ENCODE measurements at regions of chr3 and their contacts with region 1.

Region 1: DNA sequence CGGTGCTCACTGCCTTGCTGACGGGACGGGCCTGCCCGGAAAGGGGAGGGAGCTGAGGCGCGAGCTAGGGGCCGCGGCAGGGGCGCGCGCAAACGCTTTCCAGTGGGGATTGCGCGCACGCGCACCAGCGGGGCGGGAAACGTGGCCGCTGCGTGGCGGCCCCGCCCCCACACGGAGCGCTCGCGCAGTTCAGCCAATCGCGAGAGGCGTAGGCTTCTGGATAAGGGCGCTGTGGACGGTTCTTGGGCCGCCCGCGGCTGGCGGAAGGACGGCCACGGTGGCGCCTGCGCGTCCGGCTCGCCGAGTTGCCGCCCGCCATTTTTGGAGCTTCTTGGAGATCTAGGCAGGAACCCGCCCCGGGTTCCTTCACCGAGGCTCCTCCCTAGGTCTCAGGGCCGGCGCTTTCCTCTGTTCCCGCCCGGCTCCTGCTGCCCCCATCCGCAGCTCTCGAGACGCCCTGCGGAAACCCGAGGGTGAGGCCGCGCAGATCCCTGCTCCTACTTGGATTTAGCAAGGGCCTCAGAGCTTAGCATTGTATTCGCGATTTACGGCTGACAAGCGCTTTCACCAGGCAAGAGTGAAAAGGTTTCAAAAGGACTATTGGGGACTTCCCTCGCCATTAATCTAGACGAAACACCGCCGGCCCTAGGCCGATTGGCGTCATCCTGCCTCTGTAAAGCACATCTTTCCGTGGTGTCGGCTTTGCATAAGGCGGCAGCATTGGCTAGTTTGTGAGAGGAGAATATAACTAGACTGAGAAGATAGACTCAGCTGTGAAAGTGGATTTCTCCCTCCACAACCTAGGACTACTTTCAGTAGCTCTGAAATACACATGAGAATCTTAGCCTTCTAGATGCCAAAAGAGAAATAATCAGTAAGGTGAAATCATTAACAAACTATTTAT is 496 bp upstream of the STAG1 start:
- DNase-seq: peak; percentile 93
- CTCF ChIP-seq: peak; percentile 41

Region 2: DNA sequence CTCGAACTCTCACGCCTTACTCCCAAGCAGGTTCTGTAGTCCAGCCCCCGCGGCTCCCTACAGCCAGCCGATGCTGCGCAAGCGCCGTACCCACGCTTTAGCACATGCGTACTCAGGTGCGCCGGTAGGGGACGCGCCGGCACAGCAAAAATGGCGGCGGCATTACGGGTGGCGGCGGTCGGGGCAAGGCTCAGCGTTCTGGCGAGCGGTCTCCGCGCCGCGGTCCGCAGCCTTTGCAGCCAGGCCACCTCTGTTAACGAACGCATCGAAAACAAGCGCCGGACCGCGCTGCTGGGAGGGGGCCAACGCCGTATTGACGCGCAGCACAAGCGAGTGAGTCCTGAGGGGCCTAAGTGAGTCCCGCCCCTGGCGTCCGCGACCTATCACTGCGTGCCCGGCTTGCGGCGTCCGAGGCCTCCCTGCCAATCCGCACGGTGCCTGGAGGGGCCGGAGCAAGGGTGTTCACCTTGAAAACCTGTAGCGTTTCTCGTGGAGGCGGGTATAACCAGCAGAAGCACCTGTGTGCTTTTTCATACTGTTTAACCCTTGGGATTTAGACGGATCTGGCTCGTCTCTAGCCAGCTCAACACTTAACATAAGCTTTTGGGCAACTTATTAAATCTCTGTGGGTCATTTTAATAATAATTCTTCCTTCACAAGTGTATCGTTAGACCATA is 502.3 kb before region 1 on chr3 and contains the start of gene PCCB:
- CTCF ChIA-PET with region 1: interaction called, 12 read pairs
- POLR2A ChIA-PET with region 1: interaction called, 4 read pairs
- DNase-seq: peak; percentile 94
- CTCF ChIP-seq: peak; percentile 82

Region 3: DNA sequence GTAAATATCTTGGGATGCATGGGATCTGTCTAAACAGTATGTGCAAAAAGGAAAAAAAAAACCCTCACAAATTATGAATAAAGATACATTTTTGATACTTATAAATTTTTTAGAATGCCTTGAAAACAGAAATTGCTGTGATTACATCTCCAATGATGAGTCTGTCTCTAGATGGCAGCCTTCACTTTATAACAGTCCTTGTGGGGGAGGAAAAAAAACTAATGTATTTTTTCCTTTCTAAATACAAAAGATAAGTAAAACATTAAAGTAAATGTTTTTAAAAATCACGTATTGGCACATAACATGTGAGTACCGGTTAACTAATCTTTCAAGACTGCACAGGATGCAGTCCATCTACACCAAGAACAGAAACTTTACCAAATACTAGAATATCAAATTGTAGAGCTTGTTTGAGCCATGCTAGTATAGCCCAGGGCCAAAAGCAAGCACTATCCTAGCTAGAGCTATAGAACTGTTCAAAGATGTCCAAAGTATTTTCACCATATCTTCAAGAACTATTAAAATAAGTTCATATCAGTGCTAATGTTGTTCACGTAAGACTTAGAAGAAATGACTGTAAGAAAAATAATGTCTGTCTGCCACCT is 206.9 kb before region 1 on chr3:
- CTCF ChIA-PET with region 1: interaction called, 18 read pairs
- POLR2A ChIA-PET with region 1: no interaction called
- DNase-seq: no peak
- CTCF ChIP-seq: peak; percentile 24

Region 4: GRCh38 chr3:136734382-136735070 is 18.1 kb before region 1 on chr3:
- CTCF ChIA-PET with region 1: interaction called, 48 read pairs
- POLR2A ChIA-PET with region 1: interaction called, 3 read pairs
- DNase-seq: peak; percentile 28
- CTCF ChIP-seq: no peak

Region 5: GRCh38 chr3:136861890-136862616 is 109.4 kb after region 1 on chr3 and contains the start of gene NCK1:
- CTCF ChIA-PET with region 1: interaction called, 11 read pairs
- POLR2A ChIA-PET with region 1: interaction called, 12 read pairs
- DNase-seq: peak; percentile 97
- CTCF ChIP-seq: peak; percentile 11

Region 6: DNA sequence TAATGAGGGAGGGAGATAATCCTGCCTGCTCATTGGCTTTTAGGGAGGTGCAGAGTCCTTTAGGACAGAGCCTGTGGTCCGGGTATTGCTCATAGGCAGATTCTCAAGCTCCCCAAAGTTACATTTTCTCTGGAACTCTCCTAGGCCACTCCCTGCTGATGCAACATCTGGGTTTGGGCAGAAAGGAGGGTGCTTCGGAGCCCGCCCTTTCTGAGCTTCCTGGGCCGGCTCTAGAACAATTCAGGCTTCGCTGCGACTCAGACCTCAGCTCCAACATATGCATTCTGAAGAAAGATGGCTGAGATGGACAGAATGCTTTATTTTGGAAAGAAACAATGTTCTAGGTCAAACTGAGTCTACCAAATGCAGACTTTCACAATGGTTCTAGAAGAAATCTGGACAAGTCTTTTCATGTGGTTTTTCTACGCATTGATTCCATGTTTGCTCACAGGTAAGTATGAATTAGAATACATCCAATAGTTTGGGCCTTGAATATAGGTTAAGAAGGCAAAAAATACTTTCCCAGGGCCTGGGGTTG is 205.1 kb after region 1 on chr3 and contains the start of gene IL20RB:
- CTCF ChIA-PET with region 1: no interaction called
- POLR2A ChIA-PET with region 1: no interaction called
- DNase-seq: no peak
- CTCF ChIP-seq: no peak

Measured in GM10248 (cell line).